ENCODE measurements at regions of chr1 and their contacts with region 1.

Region 1: GRCh38 chr1:9874959-9875635 is 35.0 kb downstream of the CTNNBIP1 start:
- DNase-seq: peak; percentile 61 to 92
- H3K4me3 ChIP-seq: peak overlapping the region in 2 of 4 experiments; percentile 29 to 45; a peak in 4 of 8 replicates
- H3K27ac ChIP-seq: no peak overlapping the region
- H3K4me1 ChIP-seq: peaks cover 0 to 8% (median 6%) of the 10 kb centered on the region in 4 experiments; a peak in 6 of 7 replicates
- H3K27me3 ChIP-seq: no peaks in the 10 kb centered on the region
- CTCF ChIP-seq: peak; percentile 77 to 96 (median 92)
- EP300 ChIP-seq: no peak; a peak in 1 of 3 replicates
- POLR2A ChIP-seq: no peak
- RAD21 ChIP-seq: peak; percentile 93 to 95

Region 2: DNA sequence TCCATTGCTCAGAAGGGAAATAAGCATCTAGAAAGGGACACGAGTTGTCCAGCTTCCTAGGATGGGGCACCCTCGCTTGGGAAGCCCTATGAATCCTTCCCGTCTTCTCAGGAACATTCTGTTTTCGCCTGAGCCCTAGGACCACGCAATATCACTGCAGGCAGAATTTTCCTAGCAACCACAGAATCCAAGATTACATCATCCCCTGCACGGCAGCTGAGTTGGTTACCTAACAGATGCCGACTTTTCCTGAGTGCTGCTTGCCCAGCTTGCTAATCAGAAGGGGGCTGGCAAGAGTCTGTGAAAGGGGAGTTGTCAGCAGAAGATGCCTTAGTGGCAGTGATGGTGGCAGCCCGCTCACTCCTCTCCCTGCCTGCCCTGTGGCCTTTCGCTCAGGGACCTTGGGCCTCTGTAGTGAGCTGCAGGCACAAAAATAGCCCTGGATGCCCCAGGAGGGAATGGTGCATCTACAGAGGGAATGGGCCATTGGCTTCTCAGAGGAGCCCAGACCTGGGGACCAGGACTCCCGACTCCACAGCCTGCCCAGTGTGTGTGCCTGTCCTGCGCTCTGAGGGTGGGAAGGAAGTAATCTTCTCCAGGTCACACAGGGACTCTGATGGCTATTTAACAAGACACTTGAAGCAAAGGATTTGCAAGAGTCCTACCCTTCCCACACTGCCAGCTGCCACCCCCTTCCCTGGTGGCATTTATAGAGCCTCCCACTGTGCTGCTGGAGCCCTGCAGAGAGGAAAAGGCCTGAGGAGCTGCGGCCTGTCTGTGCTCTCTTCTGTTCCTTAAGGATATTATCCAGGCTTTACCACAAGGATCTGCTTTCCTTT is 22.5 kb before region 1 on chr1:
- CTCF ChIA-PET with region 1: interaction called, 28 read pairs
- POLR2A ChIA-PET with region 1: no interaction called
- DNase-seq: no peak
- H3K4me3 ChIP-seq: no peak overlapping the region
- H3K27ac ChIP-seq: no peak overlapping the region
- H3K4me1 ChIP-seq: peaks cover 3 to 11% (median 8%) of the 10 kb centered on the region in 4 experiments
- H3K27me3 ChIP-seq: no peaks in the 10 kb centered on the region
- CTCF ChIP-seq: no peak
- EP300 ChIP-seq: no peak
- POLR2A ChIP-seq: no peak
- RAD21 ChIP-seq: no peak

Region 3: GRCh38 chr1:9861360-9861759 is 13.7 kb before region 1 on chr1:
- CTCF ChIA-PET with region 1: interaction called, 47 read pairs
- POLR2A ChIA-PET with region 1: interaction called, 7 read pairs
- DNase-seq: no peak
- H3K4me3 ChIP-seq: no peak overlapping the region
- H3K27ac ChIP-seq: no peak overlapping the region
- H3K4me1 ChIP-seq: peaks cover 0 to 9% (median 7%) of the 10 kb centered on the region in 4 experiments; a peak in 6 of 7 replicates
- H3K27me3 ChIP-seq: no peaks in the 10 kb centered on the region
- CTCF ChIP-seq: peak; percentile 47 to 53 (median 48)
- EP300 ChIP-seq: no peak
- POLR2A ChIP-seq: no peak
- RAD21 ChIP-seq: peak; percentile 45 to 64

Region 4: GRCh38 chr1:9890224-9890731 is 15.2 kb after region 1 on chr1:
- CTCF ChIA-PET with region 1: interaction called, 29 read pairs
- POLR2A ChIA-PET with region 1: interaction called, 7 read pairs
- DNase-seq: no peak
- H3K4me3 ChIP-seq: no peak overlapping the region
- H3K27ac ChIP-seq: 0 out of 2 replicates have a peak overlapping the region, but pooled peaks have one; percentile 31
- H3K4me1 ChIP-seq: peaks cover 5 to 18% (median 14%) of the 10 kb centered on the region in 4 experiments
- H3K27me3 ChIP-seq: no peaks in the 10 kb centered on the region
- CTCF ChIP-seq: no peak
- EP300 ChIP-seq: no peak
- POLR2A ChIP-seq: no peak
- RAD21 ChIP-seq: no peak

Region 5: GRCh38 chr1:9910425-9911178 is 35.5 kb after region 1 on chr1:
- CTCF ChIA-PET with region 1: interaction called, 10 read pairs
- POLR2A ChIA-PET with region 1: no interaction called
- DNase-seq: peak; percentile 96 to 100
- H3K4me3 ChIP-seq: peak overlapping the region; percentile 56 to 80 (median 78)
- H3K27ac ChIP-seq: peak overlapping the region; percentile 60
- H3K4me1 ChIP-seq: peaks cover 2 to 6% (median 4%) of the 10 kb centered on the region in 4 experiments; a peak in 4 of 7 replicates
- H3K27me3 ChIP-seq: no peaks in the 10 kb centered on the region
- CTCF ChIP-seq: no peak
- EP300 ChIP-seq: no peak
- POLR2A ChIP-seq: peak; percentile 51 to 74
- RAD21 ChIP-seq: no peak

Region 6: DNA sequence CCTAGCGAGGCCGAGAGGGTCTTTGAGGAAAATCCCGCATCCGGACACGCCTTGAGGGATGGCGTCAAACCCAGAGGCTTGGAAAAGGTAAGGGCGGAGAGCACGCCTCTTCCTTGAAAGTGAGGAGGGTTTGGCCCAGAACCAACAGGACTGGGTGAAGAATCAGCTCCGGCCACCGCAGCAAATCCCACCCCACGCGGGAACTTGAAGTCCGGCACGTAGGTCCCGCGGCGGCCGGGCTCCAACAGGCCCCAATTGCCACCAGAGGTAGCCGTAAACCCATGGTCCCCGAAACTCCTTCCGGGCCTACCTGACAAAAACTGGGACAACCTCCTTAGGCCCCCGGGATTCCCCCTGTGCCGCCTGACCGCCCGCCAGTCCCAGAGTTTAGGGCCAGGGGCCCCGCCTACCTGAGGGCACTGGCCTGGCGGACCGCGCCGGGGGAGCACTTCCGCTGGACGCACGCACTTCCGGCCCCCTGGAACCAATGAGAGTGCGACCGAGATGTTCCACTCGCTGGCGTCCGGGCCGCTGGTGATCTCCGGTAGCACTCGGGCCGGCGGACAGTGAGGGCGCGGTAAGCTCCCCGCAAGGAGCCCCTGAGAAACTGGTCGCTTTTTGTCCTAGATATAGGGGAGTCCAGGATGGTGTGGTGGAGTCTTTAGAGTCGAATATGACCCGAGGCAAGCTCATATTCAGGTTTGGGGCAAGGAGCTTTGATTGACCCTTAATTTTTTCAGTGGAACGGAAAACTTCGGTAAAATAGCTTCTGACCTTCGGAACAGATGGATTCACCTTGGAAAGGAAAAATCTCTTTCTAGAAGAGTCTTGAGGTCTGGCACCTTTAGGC is 68.1 kb after region 1 on chr1 and contains the starts of genes LZIC and NMNAT1:
- CTCF ChIA-PET with region 1: interaction called, 55 read pairs
- POLR2A ChIA-PET with region 1: interaction called, 11 read pairs
- DNase-seq: peak; percentile 81 to 94
- H3K4me3 ChIP-seq: peak within 1 kb of the TSS; percentile 72 to 94 (median 88)
- H3K27ac ChIP-seq: peak within 1 kb of the TSS; percentile 76
- H3K4me1 ChIP-seq: no peaks in the 10 kb centered on the region
- H3K27me3 ChIP-seq: no peaks in the 10 kb centered on the region
- CTCF ChIP-seq: peak in 1 of 3 experiments; percentile 15; a peak in 1 of 4 replicates
- EP300 ChIP-seq: peak in 1 of 2 experiments; percentile 68; a peak in 1 of 3 replicates
- POLR2A ChIP-seq: peak; percentile 73 to 94
- RAD21 ChIP-seq: peak in 1 of 2 experiments; percentile 15; a peak in 1 of 4 replicates
- total RNA-seq, gene LZIC: 20.0 and 20.3 TPM in 2 replicates
- total RNA-seq, gene NMNAT1: 2.0 and 2.5 TPM in 2 replicates

Region 7: DNA sequence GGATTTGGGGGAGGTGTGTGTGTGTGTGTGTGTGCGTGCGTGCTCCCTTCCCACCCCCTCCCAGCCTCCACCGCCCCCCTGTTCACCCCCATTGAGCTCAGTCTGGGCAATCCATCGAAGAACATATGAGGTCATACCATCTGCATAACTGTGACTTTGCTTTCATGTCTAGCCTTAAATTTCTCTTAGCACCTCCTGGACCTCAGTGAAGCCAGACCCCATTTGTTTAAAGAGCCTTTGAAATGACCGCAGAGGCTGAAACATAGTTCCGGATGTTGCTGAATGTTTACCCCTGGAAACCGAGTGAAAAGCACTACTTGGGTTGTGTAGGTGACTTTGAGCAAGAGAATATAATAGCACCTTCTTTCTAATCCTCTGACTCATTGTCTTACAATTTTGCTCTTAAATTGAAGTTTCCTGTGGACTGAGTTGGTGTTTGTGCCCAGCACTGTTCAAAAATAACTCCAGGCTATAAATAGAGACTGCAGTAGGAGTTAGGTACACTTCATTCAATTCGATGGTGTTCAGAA is 233.1 kb after region 1 on chr1:
- CTCF ChIA-PET with region 1: no interaction called
- POLR2A ChIA-PET with region 1: no interaction called
- DNase-seq: no peak
- H3K4me3 ChIP-seq: no peak overlapping the region
- H3K27ac ChIP-seq: no peak overlapping the region
- H3K4me1 ChIP-seq: no peaks in the 10 kb centered on the region
- H3K27me3 ChIP-seq: no peaks in the 10 kb centered on the region
- CTCF ChIP-seq: no peak
- EP300 ChIP-seq: no peak
- POLR2A ChIP-seq: no peak
- RAD21 ChIP-seq: no peak

Measured in H1 (cell line).